ENCODE measurements at regions of chr12 and their contacts with region 1.

Region 1: GRCh38 chr12:31245822-31246469 is 80.0 kb downstream of the SINHCAF start:
- DNase-seq: no peak
- H3K4me3 ChIP-seq: peak overlapping the region in 2 of 3 experiments; percentile 1 to 11
- H3K27ac ChIP-seq: peak overlapping the region; percentile 27
- H3K4me1 ChIP-seq: no peaks in the 10 kb centered on the region
- H3K27me3 ChIP-seq: no peaks in the 10 kb centered on the region
- CTCF ChIP-seq: peak; percentile 43 to 55

Region 2: GRCh38 chr12:30840715-30841114 is 405.2 kb before region 1 on chr12:
- CTCF ChIA-PET with region 1: no interaction called
- dilution Hi-C with region 1: no loop called
- in situ Hi-C with region 1: no loop called
- intact Hi-C with region 1: no loop called
- DNase-seq: no peak
- H3K4me3 ChIP-seq: no peak overlapping the region
- H3K27ac ChIP-seq: no peak overlapping the region
- H3K4me1 ChIP-seq: peaks cover 6% of the 10 kb centered on the region
- H3K27me3 ChIP-seq: no peaks in the 10 kb centered on the region
- CTCF ChIP-seq: no peak

Region 3: DNA sequence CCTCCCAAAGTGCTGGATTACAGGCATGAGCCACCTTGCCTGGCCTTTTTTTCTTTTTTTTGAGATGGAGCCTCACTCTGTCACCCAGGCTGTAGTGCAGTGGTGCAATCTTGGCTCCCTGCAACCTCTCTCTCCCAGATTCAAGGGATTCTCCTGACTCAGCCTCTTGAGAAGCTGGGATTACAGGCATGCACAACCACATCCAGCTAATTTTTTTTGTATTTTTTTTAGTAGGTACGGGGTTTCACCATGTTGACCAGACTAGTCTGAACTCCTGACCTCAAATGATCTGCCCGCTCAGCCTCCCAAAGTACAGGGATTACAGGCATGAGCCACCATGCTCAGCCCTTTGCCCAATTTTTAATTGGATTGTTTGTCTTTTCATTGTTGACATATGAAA is 22.0 kb after region 1 on chr12:
- CTCF ChIA-PET with region 1: interaction called, 13 read pairs
- dilution Hi-C with region 1: no loop called
- in situ Hi-C with region 1: no loop called
- intact Hi-C with region 1: loop called (anchors 1 kb)
- DNase-seq: no peak
- H3K4me3 ChIP-seq: no peak overlapping the region
- H3K27ac ChIP-seq: no peak overlapping the region
- H3K4me1 ChIP-seq: no peaks in the 10 kb centered on the region
- H3K27me3 ChIP-seq: no peaks in the 10 kb centered on the region
- CTCF ChIP-seq: no peak

Region 4: GRCh38 chr12:31274520-31275300 is 28.8 kb after region 1 on chr12:
- CTCF ChIA-PET with region 1: interaction called, 13 read pairs
- dilution Hi-C with region 1: no loop called
- in situ Hi-C with region 1: no loop called
- intact Hi-C with region 1: loop called (anchors 1 kb)
- DNase-seq: no peak
- H3K4me3 ChIP-seq: no peak overlapping the region
- H3K27ac ChIP-seq: no peak overlapping the region
- H3K4me1 ChIP-seq: no peaks in the 10 kb centered on the region
- H3K27me3 ChIP-seq: no peaks in the 10 kb centered on the region
- CTCF ChIP-seq: no peak

Region 5: GRCh38 chr12:31589904-31590641 is 344.1 kb after region 1 on chr12:
- CTCF ChIA-PET with region 1: no interaction called
- dilution Hi-C with region 1: no loop called
- in situ Hi-C with region 1: no loop called
- intact Hi-C with region 1: no loop called
- DNase-seq: peak; percentile 52
- H3K4me3 ChIP-seq: peak overlapping the region; percentile 61 to 90 (median 70)
- H3K27ac ChIP-seq: peak overlapping the region; percentile 47
- H3K4me1 ChIP-seq: peaks cover 12% of the 10 kb centered on the region
- H3K27me3 ChIP-seq: no peaks in the 10 kb centered on the region
- CTCF ChIP-seq: peak in 1 of 2 donors; percentile 19

Region 6: GRCh38 chr12:31629756-31630732 is 384.1 kb after region 1 on chr12:
- CTCF ChIA-PET with region 1: no interaction called
- dilution Hi-C with region 1: no loop called
- in situ Hi-C with region 1: no loop called
- intact Hi-C with region 1: loop called (anchors 5 kb)
- DNase-seq: no peak
- H3K4me3 ChIP-seq: no peak overlapping the region
- H3K27ac ChIP-seq: no peak overlapping the region
- H3K4me1 ChIP-seq: no peaks in the 10 kb centered on the region
- H3K27me3 ChIP-seq: no peaks in the 10 kb centered on the region
- CTCF ChIP-seq: no peak